H1 (cell line): ENCODE measurements at regions of chr6 and their contacts with region 1.

Region 1: GRCh38 chr6:100719883-100720682 is 161.0 kb downstream of the ASCC3 start:
- DNase-seq: no peak
- H3K4me3 ChIP-seq: no peak overlapping the region
- H3K27ac ChIP-seq: no peak overlapping the region
- H3K4me1 ChIP-seq: no peaks in the 10 kb centered on the region
- H3K27me3 ChIP-seq: no peaks in the 10 kb centered on the region
- CTCF ChIP-seq: peak in 1 of 3 experiments; percentile 34; a peak in 2 of 4 replicates
- EP300 ChIP-seq: no peak
- POLR2A ChIP-seq: no peak
- RAD21 ChIP-seq: peak; percentile 44 to 46

Region 2: DNA sequence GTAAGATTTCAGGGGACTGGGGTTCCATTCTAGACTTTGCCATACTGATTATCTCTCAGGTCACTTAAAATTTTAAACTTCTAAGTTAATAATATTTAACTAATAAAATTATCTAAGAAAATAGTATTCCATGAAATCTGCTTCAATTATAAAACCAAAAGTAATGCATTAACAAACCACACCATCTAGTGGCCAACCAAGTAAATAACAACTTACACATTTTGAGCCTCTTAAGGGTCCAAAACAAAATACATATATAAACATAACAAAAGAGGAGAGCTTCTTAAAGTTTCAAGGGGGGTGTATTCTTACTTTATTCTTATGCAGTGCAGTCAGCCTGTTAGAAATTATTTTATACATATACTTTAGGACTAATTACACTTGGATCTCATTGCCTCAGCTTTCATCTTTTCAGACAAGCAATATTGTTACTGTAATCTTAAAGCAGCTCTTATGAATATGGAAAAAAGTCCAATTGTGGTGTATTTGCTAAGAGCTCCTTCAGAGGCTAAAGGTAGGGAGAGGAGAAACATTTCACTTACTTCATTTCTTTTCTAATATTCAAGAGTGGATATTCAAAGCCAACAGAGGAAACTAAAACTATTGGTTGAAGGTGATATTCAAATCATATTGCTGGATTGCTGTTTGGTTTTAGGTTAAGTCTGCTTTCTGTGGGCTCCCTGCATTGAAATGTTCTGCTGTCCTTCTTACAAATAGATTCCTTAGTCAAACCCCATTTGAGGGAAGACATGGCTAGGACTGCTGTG is 55.6 kb before region 1 on chr6:
- CTCF ChIA-PET with region 1: interaction called, 10 read pairs
- POLR2A ChIA-PET with region 1: no interaction called
- DNase-seq: no peak
- H3K4me3 ChIP-seq: no peak overlapping the region
- H3K27ac ChIP-seq: no peak overlapping the region
- H3K4me1 ChIP-seq: peaks cover 0 to 3% (median 0%) of the 10 kb centered on the region in 4 experiments; a peak in 4 of 7 replicates
- H3K27me3 ChIP-seq: no peaks in the 10 kb centered on the region
- CTCF ChIP-seq: peak in 2 of 3 experiments; percentile 11 to 50; a peak in 2 of 4 replicates
- EP300 ChIP-seq: no peak
- POLR2A ChIP-seq: no peak
- RAD21 ChIP-seq: peak in 1 of 2 experiments; percentile 59; a peak in 3 of 4 replicates

Region 3: GRCh38 chr6:100710051-100710450 is 10.0 kb before region 1 on chr6:
- CTCF ChIA-PET with region 1: interaction called, 13 read pairs
- POLR2A ChIA-PET with region 1: no interaction called
- DNase-seq: no peak
- H3K4me3 ChIP-seq: no peak overlapping the region
- H3K27ac ChIP-seq: no peak overlapping the region
- H3K4me1 ChIP-seq: no peaks in the 10 kb centered on the region
- H3K27me3 ChIP-seq: no peaks in the 10 kb centered on the region
- CTCF ChIP-seq: no peak
- EP300 ChIP-seq: no peak
- POLR2A ChIP-seq: no peak
- RAD21 ChIP-seq: no peak

Region 4: GRCh38 chr6:100730001-100730980 is 10.2 kb after region 1 on chr6:
- CTCF ChIA-PET with region 1: interaction called, 14 read pairs
- POLR2A ChIA-PET with region 1: no interaction called
- DNase-seq: no peak
- H3K4me3 ChIP-seq: no peak overlapping the region
- H3K27ac ChIP-seq: no peak overlapping the region
- H3K4me1 ChIP-seq: no peaks in the 10 kb centered on the region
- H3K27me3 ChIP-seq: no peaks in the 10 kb centered on the region
- CTCF ChIP-seq: no peak
- EP300 ChIP-seq: no peak
- POLR2A ChIP-seq: no peak
- RAD21 ChIP-seq: no peak

Region 5: DNA sequence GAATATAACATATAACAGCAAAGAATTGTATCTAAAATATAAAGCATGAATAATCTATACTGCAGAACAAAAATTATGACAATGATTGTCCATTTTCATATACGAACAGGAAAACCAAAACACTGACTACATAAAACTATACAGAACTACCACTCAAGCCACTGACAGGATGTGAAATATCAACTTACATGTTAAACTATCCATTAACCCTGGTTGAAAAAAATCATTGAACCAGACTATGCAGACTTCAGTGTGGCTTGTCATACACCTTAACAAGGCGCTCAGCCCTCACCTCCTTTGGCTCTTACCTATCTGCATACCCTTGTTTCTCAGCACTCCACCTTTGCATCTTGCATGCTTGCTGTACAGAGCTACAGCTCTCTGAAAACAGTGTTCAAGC is 126.2 kb after region 1 on chr6:
- CTCF ChIA-PET with region 1: no interaction called
- POLR2A ChIA-PET with region 1: no interaction called
- DNase-seq: no peak
- H3K4me3 ChIP-seq: no peak overlapping the region
- H3K27ac ChIP-seq: no peak overlapping the region
- H3K4me1 ChIP-seq: peaks cover 0 to 5% (median 2%) of the 10 kb centered on the region in 4 experiments; a peak in 3 of 7 replicates
- H3K27me3 ChIP-seq: no peaks in the 10 kb centered on the region
- CTCF ChIP-seq: no peak
- EP300 ChIP-seq: no peak
- POLR2A ChIP-seq: no peak
- RAD21 ChIP-seq: no peak